Activated CD4-positive, alpha-beta memory T cell treated with anti-CD3 and anti-CD28 coated beads, Interleukin-2, amount 10 ng/mL, durations not matched to agents 7 days and 5 days (primary cell): ENCODE measurements at regions of chr7 and their contacts with region 1.

Region 1: GRCh38 chr7:106153891-106154449 is 41.9 kb upstream of the SYPL1 start:
- DNase-seq: peak; percentile 76
- H3K4me3 Mint-ChIP-seq: no peak overlapping the region
- H3K27ac Mint-ChIP-seq: no peak overlapping the region
- H3K4me1 Mint-ChIP-seq: peaks cover 14% of the 10 kb centered on the region
- H3K27me3 Mint-ChIP-seq: peaks cover 39% of the 10 kb centered on the region

Region 2: DNA sequence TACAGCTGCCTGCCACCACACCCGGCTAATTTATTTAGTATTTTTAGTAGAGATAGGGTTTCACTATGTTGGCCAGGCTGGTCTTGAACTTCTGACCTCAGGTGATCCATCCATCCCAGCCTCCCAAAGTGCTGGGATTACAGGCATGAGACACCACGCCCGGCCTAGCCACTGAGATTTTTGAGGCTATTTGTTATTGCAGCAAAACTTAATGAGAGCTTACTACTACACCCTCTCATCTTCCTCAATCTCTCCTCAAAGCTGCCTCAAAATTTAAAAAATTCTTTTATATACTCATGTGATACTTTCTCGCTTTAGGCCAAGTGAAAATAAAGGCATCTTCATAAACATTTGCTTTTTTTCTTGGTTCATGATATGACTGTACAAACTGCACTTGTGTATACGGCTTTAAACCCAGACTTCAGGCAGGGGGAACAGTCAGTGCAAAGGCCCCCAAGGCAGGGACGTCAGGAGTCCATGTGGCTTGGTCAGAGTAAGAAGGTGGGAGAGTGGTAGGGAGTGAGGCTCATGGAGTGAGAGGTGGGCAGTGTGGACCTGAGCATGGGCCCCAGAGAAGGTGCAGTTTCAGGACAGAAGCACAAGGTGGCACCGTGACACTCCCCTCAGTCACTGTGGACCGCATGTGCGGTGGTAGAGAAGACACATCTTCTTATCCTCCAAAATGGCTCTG is 97.3 kb before region 1 on chr7:
- CTCF ChIA-PET with region 1: interaction called, 138 read pairs
- POLR2A ChIA-PET with region 1: interaction called, 4 read pairs
- DNase-seq: peak; percentile 76
- H3K4me3 Mint-ChIP-seq: no peak overlapping the region
- H3K27ac Mint-ChIP-seq: no peak overlapping the region
- H3K4me1 Mint-ChIP-seq: peaks cover 30% of the 10 kb centered on the region
- H3K27me3 Mint-ChIP-seq: peaks cover 9% of the 10 kb centered on the region

Region 3: DNA sequence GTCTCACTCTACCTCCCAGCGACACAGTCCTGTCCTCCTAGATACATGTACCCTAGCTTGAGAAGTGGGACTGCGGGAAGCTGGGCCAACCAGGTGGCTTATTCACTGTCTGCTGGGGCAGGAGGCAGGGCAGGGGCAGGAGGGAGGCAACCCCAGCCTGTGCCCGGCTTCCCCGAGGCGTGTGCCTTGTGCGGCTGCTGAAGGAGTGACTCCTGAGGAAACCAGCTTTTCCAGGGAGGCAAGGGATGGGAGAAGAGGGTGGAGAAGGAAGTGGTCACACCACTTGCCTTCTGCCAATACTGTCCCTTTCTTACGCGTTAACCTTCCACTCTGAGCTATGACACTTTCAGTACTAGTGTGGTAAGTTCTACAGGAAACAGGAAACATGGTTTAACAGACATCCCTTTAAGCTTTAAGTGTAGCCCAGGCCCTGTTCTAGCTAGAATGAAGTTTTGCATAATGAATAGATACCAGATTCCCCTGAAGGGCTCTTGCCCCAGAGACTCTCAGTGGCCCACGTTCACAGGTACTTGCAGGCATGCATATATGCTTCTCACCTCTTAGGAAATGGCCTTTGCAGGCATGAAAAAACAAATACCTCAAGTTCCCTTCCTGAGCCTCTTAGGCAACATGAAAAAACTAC is 82.5 kb before region 1 on chr7:
- CTCF ChIA-PET with region 1: interaction called, 17 read pairs
- POLR2A ChIA-PET with region 1: interaction called, 3 read pairs
- DNase-seq: peak; percentile 57
- H3K4me3 Mint-ChIP-seq: peak overlapping the region; percentile 70
- H3K27ac Mint-ChIP-seq: peak overlapping the region; percentile 96
- H3K4me1 Mint-ChIP-seq: peaks cover 44% of the 10 kb centered on the region
- H3K27me3 Mint-ChIP-seq: no peaks in the 10 kb centered on the region

Region 4: DNA sequence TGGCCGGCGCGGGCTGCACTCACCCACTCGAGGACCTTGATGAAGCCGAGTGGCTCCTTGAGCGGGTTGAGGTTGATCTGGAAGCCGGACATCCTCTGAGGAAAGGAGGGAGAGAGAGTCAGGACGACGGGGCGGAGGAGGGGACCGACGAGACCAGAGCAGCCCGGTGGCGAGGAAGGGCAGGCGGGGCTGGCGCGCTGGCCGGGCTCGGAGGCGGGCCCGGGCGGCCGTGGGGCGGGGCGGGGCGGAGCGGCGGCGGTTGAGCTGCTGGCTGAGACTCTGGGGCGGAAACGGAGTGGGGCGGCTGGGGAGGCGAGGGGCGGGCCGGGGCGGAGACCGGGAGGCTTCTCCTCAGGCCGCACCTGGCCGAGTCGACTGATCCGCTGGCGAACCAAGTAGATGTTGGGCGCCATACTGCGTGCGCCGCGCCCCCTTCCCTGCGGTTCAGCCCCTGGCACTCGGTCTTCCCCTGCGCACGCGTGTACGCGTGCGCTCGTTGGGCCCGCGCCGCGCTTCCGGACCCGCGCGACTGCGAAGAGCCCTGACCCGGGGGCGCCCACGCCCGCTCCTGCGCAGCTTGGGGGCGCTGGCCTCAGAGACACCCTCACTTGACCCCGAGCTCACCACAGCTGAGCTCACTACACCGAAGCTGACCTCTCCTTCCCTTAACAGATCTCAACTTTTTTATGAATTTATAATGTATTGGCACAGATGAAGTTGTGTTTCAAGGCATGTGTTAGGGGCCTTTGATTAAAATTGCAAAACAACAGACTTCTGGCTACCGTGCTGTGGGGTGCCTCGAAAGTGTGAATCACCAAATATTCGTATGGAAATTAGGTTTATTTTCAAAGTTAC is 41.6 kb before region 1 on chr7 and contains the start of gene SYPL1:
- CTCF ChIA-PET with region 1: interaction called, 14 read pairs
- POLR2A ChIA-PET with region 1: interaction called, 4 read pairs
- DNase-seq: peak; percentile 91
- H3K4me3 Mint-ChIP-seq: peak within 1 kb of the TSS; percentile 82
- H3K27ac Mint-ChIP-seq: peak within 1 kb of the TSS; percentile 85
- H3K4me1 Mint-ChIP-seq: peaks cover 45% of the 10 kb centered on the region
- H3K27me3 Mint-ChIP-seq: peaks cover 14% of the 10 kb centered on the region
- total RNA-seq, gene SYPL1: 37.5 to 38.8 TPM

Region 5: GRCh38 chr7:106126170-106126938 is 27.6 kb before region 1 on chr7:
- CTCF ChIA-PET with region 1: interaction called, 10 read pairs
- POLR2A ChIA-PET with region 1: no interaction called
- DNase-seq: peak; percentile 29
- H3K4me3 Mint-ChIP-seq: peak overlapping the region; percentile 42
- H3K27ac Mint-ChIP-seq: peak overlapping the region; percentile 1
- H3K4me1 Mint-ChIP-seq: peaks cover 11% of the 10 kb centered on the region
- H3K27me3 Mint-ChIP-seq: peaks cover 30% of the 10 kb centered on the region

Region 6: DNA sequence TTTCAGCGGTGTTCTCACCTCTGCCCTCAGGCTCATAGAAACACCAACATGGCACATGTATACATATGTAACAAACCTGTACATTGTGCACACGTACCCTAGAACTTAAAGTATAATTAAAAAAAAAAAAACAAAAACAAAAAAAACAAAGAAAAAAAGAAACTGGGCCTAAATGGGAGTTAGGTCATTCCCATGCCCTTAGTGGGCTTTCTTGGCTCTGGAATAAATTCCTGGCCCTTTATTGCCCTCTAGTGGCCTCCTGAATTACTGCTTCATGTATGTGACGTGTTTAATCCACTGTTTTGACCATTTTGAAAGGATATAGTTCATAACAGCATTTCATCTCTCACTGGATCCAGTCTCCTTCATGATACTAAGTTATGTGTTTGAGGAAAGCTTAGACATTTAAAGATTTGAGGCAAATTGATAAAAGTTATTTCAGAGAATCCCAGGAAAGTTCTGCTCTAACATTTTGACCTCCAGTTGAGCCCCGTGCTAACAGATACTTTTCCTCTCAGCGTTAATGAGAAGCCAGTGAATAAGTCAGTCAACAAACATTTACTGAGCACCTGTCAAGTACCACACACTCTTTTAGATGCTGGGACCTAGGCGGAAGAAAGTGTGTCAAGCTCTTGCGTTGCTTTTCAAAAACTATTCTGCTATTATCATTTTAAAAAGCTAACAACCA is 12.8 kb after region 1 on chr7:
- CTCF ChIA-PET with region 1: interaction called, 76 read pairs
- POLR2A ChIA-PET with region 1: no interaction called
- DNase-seq: peak; percentile 28
- H3K4me3 Mint-ChIP-seq: no peak overlapping the region
- H3K27ac Mint-ChIP-seq: no peak overlapping the region
- H3K4me1 Mint-ChIP-seq: no peaks in the 10 kb centered on the region
- H3K27me3 Mint-ChIP-seq: peaks cover 20% of the 10 kb centered on the region